AG04449 (cell line): ENCODE measurements at regions of chr11 and their contacts with region 1.

Region 1: DNA sequence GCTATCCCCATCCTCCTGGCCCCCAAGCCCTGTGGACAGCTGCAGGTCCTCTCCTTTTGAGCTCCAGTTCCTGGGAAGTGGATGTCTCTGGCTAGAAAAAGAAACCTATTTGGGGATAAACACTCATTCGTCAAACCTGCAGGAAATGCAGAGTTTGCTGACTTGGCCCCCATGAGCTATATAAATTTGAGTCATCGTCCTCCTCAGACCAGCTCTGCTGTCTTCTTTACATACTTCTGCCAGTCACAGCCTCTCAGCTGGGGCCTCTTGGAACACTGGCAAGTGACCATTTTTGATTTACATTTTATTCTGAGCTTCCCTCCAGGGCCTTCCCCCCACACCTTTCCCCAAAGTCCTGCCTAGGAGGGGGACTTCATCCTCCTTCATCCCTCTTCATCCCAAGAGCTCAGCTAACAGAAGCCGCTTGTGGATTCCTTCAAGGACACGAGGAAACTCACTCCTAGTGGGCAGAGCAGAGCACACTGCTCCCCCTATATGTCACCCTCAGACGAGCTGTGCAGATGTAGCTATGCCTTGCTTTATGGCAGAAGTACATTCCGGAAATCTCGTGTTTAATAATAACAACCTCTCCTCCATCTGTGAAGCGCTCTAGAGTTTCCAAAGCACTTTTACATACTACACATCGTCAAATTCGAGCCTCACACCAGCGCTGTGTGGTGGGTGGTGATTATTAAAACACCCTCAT is 131.8 kb downstream of the FEZ1 start:
- DNase-seq: peak; percentile 37
- H3K4me3 ChIP-seq: no peak overlapping the region
- CTCF ChIP-seq: peak; percentile 60

Region 2: DNA sequence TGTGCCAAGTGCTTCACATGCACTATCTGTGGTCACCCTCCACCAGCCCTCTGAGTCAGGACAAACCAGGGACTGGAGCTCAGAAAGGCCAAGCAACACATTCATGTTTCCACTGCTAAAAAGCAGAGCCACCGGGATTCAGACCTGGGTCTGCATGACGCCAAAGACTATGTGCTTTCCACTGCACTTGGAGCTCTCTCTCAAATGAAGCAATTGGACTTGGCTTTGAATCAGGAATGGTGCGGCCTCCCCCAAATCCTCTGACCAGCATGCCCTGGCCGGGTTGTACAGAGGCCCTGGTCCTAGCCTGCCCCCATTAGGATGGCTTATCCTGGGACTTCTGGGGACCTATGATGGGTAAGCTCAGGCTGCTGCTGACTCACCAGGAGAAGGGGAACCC is 119.0 kb before region 1 on chr11:
- CTCF ChIA-PET with region 1: no interaction called
- POLR2A ChIA-PET with region 1: no interaction called
- DNase-seq: no peak
- H3K4me3 ChIP-seq: no peak overlapping the region
- CTCF ChIP-seq: no peak

Region 3: GRCh38 chr11:125376117-125376516 is 11.8 kb after region 1 on chr11:
- CTCF ChIA-PET with region 1: interaction called, 351 read pairs
- POLR2A ChIA-PET with region 1: no interaction called
- DNase-seq: no peak
- H3K4me3 ChIP-seq: no peak overlapping the region
- CTCF ChIP-seq: no peak

Region 4: GRCh38 chr11:125381499-125382044 is 17.3 kb after region 1 on chr11:
- CTCF ChIA-PET with region 1: interaction called, 13 read pairs
- POLR2A ChIA-PET with region 1: no interaction called
- DNase-seq: no peak
- H3K4me3 ChIP-seq: no peak overlapping the region
- CTCF ChIP-seq: no peak